ENCODE measurements at regions of chr13 and their contacts with region 1.

Region 1: GRCh38 chr13:96020155-96020575 is 33.0 kb downstream of the UGGT2 start:
- DNase-seq: peak; percentile 39
- H3K4me3 ChIP-seq: no peak overlapping the region
- H3K27ac ChIP-seq: no peak overlapping the region
- H3K4me1 ChIP-seq: no peaks in the 10 kb centered on the region
- H3K27me3 ChIP-seq: no peaks in the 10 kb centered on the region
- CTCF ChIP-seq: peak; percentile 43 to 69

Region 2: DNA sequence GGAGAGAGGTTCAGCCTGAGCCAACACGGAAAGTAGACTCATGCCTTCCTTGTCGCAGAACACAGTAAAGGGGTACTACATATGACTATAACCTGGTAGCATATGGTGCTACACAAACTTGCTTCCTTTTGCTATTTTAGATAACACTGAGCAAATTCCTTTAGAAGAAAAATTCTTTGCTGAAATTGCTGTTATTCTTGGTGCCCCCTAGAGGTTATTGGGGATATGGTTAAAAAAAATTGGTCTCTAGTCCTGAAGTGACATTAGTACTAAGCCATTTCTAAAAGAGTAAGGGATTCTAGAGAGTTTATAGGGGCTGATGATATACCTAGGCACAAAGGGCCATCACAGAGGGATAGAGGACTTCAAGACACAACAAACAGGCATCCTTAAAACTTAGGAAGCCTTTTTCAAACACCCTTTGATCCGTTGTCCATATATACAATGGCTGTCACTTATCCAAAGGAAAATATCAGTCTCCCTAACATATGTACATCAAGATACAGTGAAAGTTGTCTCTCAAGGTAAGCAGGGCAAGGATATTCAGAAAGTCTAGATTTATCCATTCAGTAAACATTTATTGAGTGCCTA is 55.9 kb after region 1 on chr13:
- CTCF ChIA-PET with region 1: no interaction called
- dilution Hi-C with region 1: no loop called
- in situ Hi-C with region 1: no loop called
- intact Hi-C with region 1: loop called (anchors 5 kb)
- DNase-seq: no peak
- H3K4me3 ChIP-seq: no peak overlapping the region
- H3K27ac ChIP-seq: no peak overlapping the region
- H3K4me1 ChIP-seq: no peaks in the 10 kb centered on the region
- H3K27me3 ChIP-seq: peaks cover 3% of the 10 kb centered on the region
- CTCF ChIP-seq: peak; percentile 61 to 64

Region 3: DNA sequence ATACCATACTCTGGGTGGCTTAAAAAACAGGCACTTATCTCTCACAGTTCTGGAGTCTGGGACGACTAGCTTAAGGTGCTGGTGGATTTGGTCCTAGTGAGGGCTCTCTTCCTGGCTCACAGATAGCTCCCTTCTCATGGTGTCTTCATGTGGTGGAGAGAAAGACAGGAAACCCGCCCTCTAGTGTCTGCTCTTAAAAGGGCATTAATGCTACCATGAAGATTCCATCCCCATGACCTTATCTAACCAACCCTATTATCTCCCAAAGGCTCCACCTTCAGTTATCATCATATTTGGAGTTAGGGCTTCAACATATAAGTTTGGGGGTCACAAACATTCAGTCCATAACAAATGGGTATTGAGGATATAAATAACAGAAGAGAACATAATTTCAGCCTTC is 209.2 kb after region 1 on chr13:
- CTCF ChIA-PET with region 1: interaction called, 13 read pairs
- dilution Hi-C with region 1: no loop called
- in situ Hi-C with region 1: no loop called
- intact Hi-C with region 1: loop called (anchors 1 kb)
- DNase-seq: peak; percentile 32
- H3K4me3 ChIP-seq: no peak overlapping the region
- H3K27ac ChIP-seq: no peak overlapping the region
- H3K4me1 ChIP-seq: peaks cover 7% of the 10 kb centered on the region
- H3K27me3 ChIP-seq: no peaks in the 10 kb centered on the region
- CTCF ChIP-seq: peak; percentile 61 to 75

Region 4: DNA sequence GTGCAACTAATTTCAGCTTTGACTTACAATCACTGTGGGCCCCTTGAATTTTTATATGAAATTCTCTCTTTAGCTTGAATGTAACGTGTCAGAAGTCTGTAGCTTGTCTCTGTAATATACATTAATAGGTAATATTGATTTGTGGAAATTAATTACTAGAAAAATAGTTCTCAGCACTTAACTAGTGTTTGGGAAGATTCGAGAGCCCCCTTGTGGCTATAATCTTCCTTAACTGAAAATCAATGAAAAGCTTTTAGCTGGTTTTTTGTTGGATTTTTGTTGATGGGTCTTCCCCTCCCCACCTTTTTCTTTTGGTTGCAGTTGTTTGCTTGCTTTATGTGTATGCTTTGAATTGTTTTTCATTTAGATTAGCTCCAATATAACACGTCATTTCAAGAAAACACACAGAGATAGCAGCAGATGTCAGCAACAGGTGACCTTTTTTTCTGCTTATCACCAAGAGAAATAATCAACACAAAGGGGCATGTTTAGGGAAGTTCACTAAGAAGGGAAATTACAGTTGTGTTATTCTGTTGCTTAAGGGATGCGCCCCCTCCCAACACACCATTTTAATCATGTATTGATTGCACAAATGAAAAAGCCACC is 797.3 kb after region 1 on chr13:
- CTCF ChIA-PET with region 1: interaction called, 10 read pairs
- dilution Hi-C with region 1: no loop called
- in situ Hi-C with region 1: loop called in 1 of 2 experiments (anchors 25 kb)
- intact Hi-C with region 1: loop called (anchors 1 kb)
- DNase-seq: peak; percentile 4
- H3K4me3 ChIP-seq: no peak overlapping the region
- H3K27ac ChIP-seq: no peak overlapping the region
- H3K4me1 ChIP-seq: no peaks in the 10 kb centered on the region
- H3K27me3 ChIP-seq: no peaks in the 10 kb centered on the region
- CTCF ChIP-seq: peak; percentile 31 to 62

Region 5: GRCh38 chr13:96958286-96958891 is 938.2 kb after region 1 on chr13:
- CTCF ChIA-PET with region 1: no interaction called
- dilution Hi-C with region 1: no loop called
- in situ Hi-C with region 1: no loop called
- intact Hi-C with region 1: loop called (anchors 5 kb)
- DNase-seq: peak; percentile 4
- H3K4me3 ChIP-seq: no peak overlapping the region
- H3K27ac ChIP-seq: no peak overlapping the region
- H3K4me1 ChIP-seq: no peaks in the 10 kb centered on the region
- H3K27me3 ChIP-seq: no peaks in the 10 kb centered on the region
- CTCF ChIP-seq: peak; percentile 78 to 84